Caco-2 (cell line): ENCODE measurements at regions of chr20 and their contacts with region 1.

Region 1: DNA sequence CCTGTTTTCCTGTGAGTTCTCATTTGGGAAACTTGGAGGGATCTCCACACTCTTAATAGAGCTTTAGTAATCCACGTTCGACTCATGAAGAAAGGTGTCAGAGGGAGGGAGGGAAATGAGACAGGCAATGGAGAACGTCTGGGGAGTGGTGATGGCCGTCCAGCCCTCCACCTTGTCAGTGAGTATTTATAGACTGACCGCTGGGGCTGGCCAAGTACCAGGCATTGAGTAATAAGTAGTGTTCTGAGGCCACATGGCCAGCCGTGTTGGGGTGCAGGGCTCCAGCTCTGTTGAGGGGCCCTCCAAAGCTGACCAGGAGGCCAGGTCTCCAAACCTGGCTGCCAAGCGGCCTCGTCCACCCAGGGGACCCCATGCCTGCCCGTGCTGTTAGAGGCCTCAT is 11.3 kb upstream of the DSN1 start:
- DNase-seq: no peak
- H3K4me3 ChIP-seq: no peak overlapping the region
- H3K4me3 Mint-ChIP-seq: no peak overlapping the region
- H3K27ac Mint-ChIP-seq: no peak overlapping the region
- H3K4me1 ChIP-seq: no peaks in the 10 kb centered on the region
- H3K4me1 Mint-ChIP-seq: no peaks in the 10 kb centered on the region
- H3K27me3 ChIP-seq: no peaks in the 10 kb centered on the region
- H3K27me3 Mint-ChIP-seq: no peaks in the 10 kb centered on the region
- CTCF ChIP-seq: no peak

Region 2: GRCh38 chr20:36815454-36816091 is 30.7 kb after region 1 on chr20:
- CTCF ChIA-PET with region 1: no interaction called
- POLR2A ChIA-PET with region 1: no interaction called
- intact Hi-C with region 1: no loop called
- DNase-seq: no peak
- H3K4me3 ChIP-seq: no peak overlapping the region
- H3K4me3 Mint-ChIP-seq: no peak overlapping the region
- H3K27ac Mint-ChIP-seq: no peak overlapping the region
- H3K4me1 ChIP-seq: peaks cover 8% of the 10 kb centered on the region; the same call in 1 of the 2 replicates
- H3K4me1 Mint-ChIP-seq: peaks cover 10% of the 10 kb centered on the region
- H3K27me3 ChIP-seq: no peaks in the 10 kb centered on the region
- H3K27me3 Mint-ChIP-seq: no peaks in the 10 kb centered on the region
- CTCF ChIP-seq: no peak

Region 3: DNA sequence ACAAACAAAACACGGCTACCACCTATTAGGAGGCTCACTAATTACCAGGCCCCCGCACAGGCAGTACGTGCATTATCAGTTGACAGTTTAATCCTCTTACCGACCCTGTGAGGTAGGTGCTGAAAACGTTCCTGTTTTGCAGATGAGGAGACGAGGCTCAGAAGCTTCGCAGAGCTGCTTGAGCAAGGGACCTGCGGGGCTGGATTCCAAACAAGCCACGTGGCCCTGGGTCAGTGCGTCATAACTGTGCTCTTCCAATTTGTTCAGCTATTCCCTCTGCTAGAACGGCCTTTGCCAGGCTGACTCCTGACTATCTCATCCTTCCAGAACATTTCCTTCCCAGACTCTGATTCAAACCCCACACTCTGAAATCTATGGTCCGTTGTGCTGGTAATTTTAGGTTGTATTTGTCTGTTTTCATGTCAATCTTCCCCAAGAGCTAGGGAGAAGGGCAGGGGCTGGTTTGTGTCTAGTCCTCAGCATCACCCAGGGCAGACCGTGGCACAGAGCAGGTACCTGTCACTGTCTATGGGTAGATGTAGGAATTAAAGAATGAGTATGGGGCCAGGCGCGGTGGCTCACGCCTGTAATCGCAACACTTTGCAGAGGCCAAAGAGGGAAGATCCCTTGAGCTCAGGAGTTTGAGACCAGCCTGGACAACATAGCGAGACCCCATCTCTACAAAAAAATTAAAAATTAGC is 62.3 kb after region 1 on chr20:
- CTCF ChIA-PET with region 1: interaction called, 4 read pairs
- POLR2A ChIA-PET with region 1: interaction called, 13 read pairs
- intact Hi-C with region 1: no loop called
- DNase-seq: peak; percentile 79
- H3K4me3 ChIP-seq: no peak overlapping the region
- H3K4me3 Mint-ChIP-seq: no peak overlapping the region
- H3K27ac Mint-ChIP-seq: peak overlapping the region; percentile 83
- H3K4me1 ChIP-seq: peaks cover 18% of the 10 kb centered on the region
- H3K4me1 Mint-ChIP-seq: peaks cover 14% of the 10 kb centered on the region
- H3K27me3 ChIP-seq: no peaks in the 10 kb centered on the region
- H3K27me3 Mint-ChIP-seq: no peaks in the 10 kb centered on the region
- CTCF ChIP-seq: no peak